Heart left ventricle (tissue), 16 donors: ENCODE measurements at regions of chr12 and their contacts with region 1.

Region 1: DNA sequence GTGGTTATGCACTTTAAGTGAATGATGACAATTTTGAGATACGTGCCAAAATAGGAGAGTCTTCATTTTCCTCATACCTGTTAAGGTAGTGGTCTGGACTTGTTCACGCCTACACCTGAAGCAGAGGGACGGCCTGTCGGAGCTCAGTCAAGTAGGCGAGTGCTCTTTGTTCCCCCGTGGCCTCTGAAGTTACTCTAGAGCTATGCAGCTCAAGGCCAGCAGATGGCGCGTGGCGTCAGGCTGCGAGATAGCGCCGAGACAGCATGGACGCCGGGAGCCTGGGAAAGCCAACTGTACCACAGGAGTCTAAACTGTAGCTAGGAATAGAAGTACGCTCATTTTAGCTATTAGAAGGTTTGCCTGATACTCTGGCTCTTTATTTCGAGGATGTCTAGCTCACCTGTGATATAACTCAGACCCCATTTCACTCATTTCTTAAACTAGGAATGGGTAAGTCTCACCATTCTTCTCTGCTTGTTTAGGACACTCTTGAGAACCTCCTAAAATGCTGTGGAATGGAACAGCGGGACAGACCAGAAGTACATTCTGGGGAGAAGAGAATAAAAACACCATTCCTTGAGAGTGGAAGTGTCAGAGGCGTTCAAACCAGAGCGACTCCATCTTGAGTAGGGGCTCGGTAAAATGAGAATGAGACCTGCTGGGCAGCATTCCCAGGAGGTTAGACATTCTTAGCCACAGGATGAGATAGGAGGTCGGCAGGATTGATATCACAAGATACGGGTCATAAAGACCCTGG is 267.4 kb upstream of the HMGA2 start:
- DNase-seq: peak; percentile 69 to 88 (median 80)
- ATAC-seq: peak; percentile 89 to 99 (median 98)
- H3K4me3 ChIP-seq: no peak overlapping the region
- H3K27ac ChIP-seq: no peak overlapping the region
- H3K4me1 ChIP-seq: peaks cover 0 to 9% (median 0%) of the 10 kb centered on the region in 12 donors
- H3K27me3 ChIP-seq: peaks cover 0 to 9% (median 0%) of the 10 kb centered on the region in 9 donors
- CTCF ChIP-seq: peak; percentile 83 to 95 (median 92)
- POLR2A ChIP-seq: no peak

Region 2: GRCh38 chr12:65602610-65603295 is 45.9 kb after region 1 on chr12:
- intact Hi-C with region 1: loop called in 2 of 10 experiments (anchors 5 to 10 kb)
- DNase-seq: peak; percentile 73 to 86 (median 80)
- ATAC-seq: peak; percentile 88 to 98 (median 96)
- H3K4me3 ChIP-seq: peak overlapping the region in 9 of 12 donors; percentile 18 to 51 (median 34)
- H3K27ac ChIP-seq: peak overlapping the region in 10 of 12 donors; percentile 6 to 65 (median 49)
- H3K4me1 ChIP-seq: peaks cover 0 to 25% (median 16%) of the 10 kb centered on the region in 12 donors
- H3K27me3 ChIP-seq: peaks cover 0 to 14% (median 3%) of the 10 kb centered on the region in 9 donors
- CTCF ChIP-seq: peak; percentile 60 to 85 (median 72)
- POLR2A ChIP-seq: no peak

Region 3: GRCh38 chr12:65673732-65674131 is 116.9 kb after region 1 on chr12:
- intact Hi-C with region 1: loop called in 4 of 10 experiments (anchors 5 kb)
- DNase-seq: no peak
- ATAC-seq: no peak
- H3K4me3 ChIP-seq: no peak overlapping the region
- H3K27ac ChIP-seq: no peak overlapping the region
- H3K4me1 ChIP-seq: no peaks in the 10 kb centered on the region
- H3K27me3 ChIP-seq: no peaks in the 10 kb centered on the region
- CTCF ChIP-seq: peak in 8 of 12 donors; percentile 7 to 45 (median 32)
- POLR2A ChIP-seq: no peak

Region 4: GRCh38 chr12:65685514-65685913 is 128.7 kb after region 1 on chr12:
- intact Hi-C with region 1: loop called in 4 of 10 experiments (anchors 5 to 10 kb)
- DNase-seq: no peak
- ATAC-seq: peak in 1 of 4 donors; percentile 24
- H3K4me3 ChIP-seq: no peak overlapping the region
- H3K27ac ChIP-seq: no peak overlapping the region
- H3K4me1 ChIP-seq: no peaks in the 10 kb centered on the region
- H3K27me3 ChIP-seq: no peaks in the 10 kb centered on the region
- CTCF ChIP-seq: peak; percentile 18 to 56 (median 44)
- POLR2A ChIP-seq: no peak

Region 5: GRCh38 chr12:65699251-65699650 is 142.4 kb after region 1 on chr12:
- intact Hi-C with region 1: no loop called
- DNase-seq: no peak
- ATAC-seq: peak in 3 of 4 donors; percentile 47 to 80 (median 75)
- H3K4me3 ChIP-seq: no peak overlapping the region
- H3K27ac ChIP-seq: no peak overlapping the region
- H3K4me1 ChIP-seq: no peaks in the 10 kb centered on the region
- H3K27me3 ChIP-seq: peaks cover 0 to 4% (median 0%) of the 10 kb centered on the region in 9 donors
- CTCF ChIP-seq: peak in 3 of 12 donors; percentile 8 to 30 (median 23)
- POLR2A ChIP-seq: no peak

Region 6: DNA sequence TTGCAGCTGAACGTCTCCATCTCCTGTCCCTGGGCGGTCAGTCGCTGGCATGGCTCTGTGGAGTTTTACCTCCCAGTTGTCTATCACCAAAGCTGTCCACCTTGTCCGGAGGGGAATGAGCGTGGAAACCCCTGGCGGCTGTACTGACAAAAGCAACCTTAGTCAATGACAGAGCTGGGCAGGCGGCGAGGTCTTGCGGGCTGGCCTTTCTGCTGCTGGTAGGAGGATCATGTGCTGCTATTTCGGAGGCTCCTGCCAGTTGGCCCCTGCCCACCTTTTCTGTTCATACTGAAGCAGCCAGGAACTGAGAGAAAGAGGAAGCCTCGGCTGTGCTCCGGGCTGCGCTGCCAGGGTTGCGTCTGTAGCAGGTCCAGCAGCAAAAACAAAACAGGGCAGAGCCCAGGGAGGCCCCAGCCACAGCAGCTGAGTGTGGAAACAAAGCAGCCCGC is 325.1 kb after region 1 on chr12:
- intact Hi-C with region 1: loop called in 1 of 10 experiments (anchors 5 kb)
- DNase-seq: peak; percentile 73 to 88 (median 77)
- ATAC-seq: peak; percentile 85 to 94 (median 90)
- H3K4me3 ChIP-seq: peak overlapping the region; percentile 5 to 58 (median 44)
- H3K27ac ChIP-seq: peak overlapping the region in 11 of 12 donors; percentile 44 to 81 (median 69)
- H3K4me1 ChIP-seq: peaks cover 0 to 36% (median 12%) of the 10 kb centered on the region in 12 donors
- H3K27me3 ChIP-seq: no peaks in the 10 kb centered on the region
- CTCF ChIP-seq: peak in 6 of 12 donors; percentile 12 to 40 (median 28)
- POLR2A ChIP-seq: no peak

Region 7: GRCh38 chr12:65986047-65986446 is 429.2 kb after region 1 on chr12:
- intact Hi-C with region 1: loop called in 4 of 10 experiments (anchors 5 to 10 kb)
- DNase-seq: no peak
- ATAC-seq: no peak
- H3K4me3 ChIP-seq: no peak overlapping the region
- H3K27ac ChIP-seq: no peak overlapping the region
- H3K4me1 ChIP-seq: no peaks in the 10 kb centered on the region
- H3K27me3 ChIP-seq: peaks cover 0 to 3% (median 0%) of the 10 kb centered on the region in 9 donors
- CTCF ChIP-seq: peak in 1 of 12 donors; percentile 8
- POLR2A ChIP-seq: no peak

Region 8: GRCh38 chr12:66035288-66035966 is 478.6 kb after region 1 on chr12:
- intact Hi-C with region 1: loop called in 1 of 10 experiments (anchors 5 kb)
- DNase-seq: no peak
- ATAC-seq: no peak
- H3K4me3 ChIP-seq: no peak overlapping the region
- H3K27ac ChIP-seq: peak overlapping the region in 5 of 12 donors; percentile 23 to 70 (median 65)
- H3K4me1 ChIP-seq: peaks cover 0 to 11% (median 4%) of the 10 kb centered on the region in 12 donors
- H3K27me3 ChIP-seq: peaks cover 0 to 2% (median 0%) of the 10 kb centered on the region in 9 donors
- CTCF ChIP-seq: peak in 9 of 12 donors; percentile 12 to 45 (median 36)
- POLR2A ChIP-seq: no peak